Activated CD4-positive, alpha-beta T cell treated with anti-CD3 and anti-CD28 coated beads, Interleukin-2, amount 10 ng/mL, durations not matched to agents 24 days and 14 days (primary cell): ENCODE measurements at regions of chr6 and their contacts with region 1.

Region 1: GRCh38 chr6:35240840-35241801 is 18.4 kb upstream of the ZNF76 start:
- DNase-seq: peak; percentile 94
- H3K4me3 Mint-ChIP-seq: no peak overlapping the region
- H3K27ac Mint-ChIP-seq: no peak overlapping the region
- H3K4me1 Mint-ChIP-seq: peaks cover 4% of the 10 kb centered on the region
- H3K27me3 Mint-ChIP-seq: no peaks in the 10 kb centered on the region

Region 2: DNA sequence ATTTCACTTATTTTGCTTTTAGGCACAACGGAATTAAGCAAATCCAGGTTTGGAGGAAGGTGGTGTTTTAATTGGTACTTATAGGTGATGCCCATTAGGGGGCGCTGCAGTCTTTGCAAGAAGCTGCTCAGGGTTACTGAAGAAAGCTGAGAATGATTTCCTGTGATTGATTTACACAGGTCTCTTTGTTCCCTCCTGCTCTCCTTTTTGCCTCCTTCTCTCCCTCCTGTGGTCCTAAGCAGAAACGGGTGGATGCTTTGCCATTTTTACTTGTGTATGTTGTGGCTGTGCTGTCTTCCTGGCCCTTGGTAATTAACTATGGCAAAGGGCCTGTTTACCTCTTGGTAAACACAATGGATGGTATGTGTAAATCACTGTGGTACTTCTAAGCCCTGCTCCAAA is 254.3 kb before region 1 on chr6:
- intact Hi-C with region 1: loop called (anchors 1 kb)
- DNase-seq: peak; percentile 87
- H3K4me3 Mint-ChIP-seq: no peak overlapping the region
- H3K27ac Mint-ChIP-seq: no peak overlapping the region
- H3K4me1 Mint-ChIP-seq: peaks cover 2% of the 10 kb centered on the region
- H3K27me3 Mint-ChIP-seq: no peaks in the 10 kb centered on the region

Region 3: GRCh38 chr6:35139908-35140655 is 101.0 kb before region 1 on chr6:
- intact Hi-C with region 1: loop called (anchors 2 kb)
- DNase-seq: peak; percentile 81
- H3K4me3 Mint-ChIP-seq: peak overlapping the region; percentile 8
- H3K27ac Mint-ChIP-seq: peak overlapping the region; percentile 2
- H3K4me1 Mint-ChIP-seq: peaks cover 19% of the 10 kb centered on the region
- H3K27me3 Mint-ChIP-seq: peaks cover 26% of the 10 kb centered on the region

Region 4: GRCh38 chr6:35146453-35146852 is 94.7 kb before region 1 on chr6:
- intact Hi-C with region 1: loop called (anchors 1 kb)
- DNase-seq: peak; percentile 72
- H3K4me3 Mint-ChIP-seq: no peak overlapping the region
- H3K27ac Mint-ChIP-seq: no peak overlapping the region
- H3K4me1 Mint-ChIP-seq: peaks cover 33% of the 10 kb centered on the region
- H3K27me3 Mint-ChIP-seq: peaks cover 6% of the 10 kb centered on the region

Region 5: GRCh38 chr6:35218021-35218420 is 23.1 kb before region 1 on chr6:
- intact Hi-C with region 1: no loop called
- DNase-seq: no peak
- H3K4me3 Mint-ChIP-seq: no peak overlapping the region
- H3K27ac Mint-ChIP-seq: no peak overlapping the region
- H3K4me1 Mint-ChIP-seq: peaks cover 2% of the 10 kb centered on the region
- H3K27me3 Mint-ChIP-seq: peaks cover 53% of the 10 kb centered on the region